CD4-positive, alpha-beta memory T cell (primary cell): ENCODE measurements at regions of chr4 and their contacts with region 1.

Region 1: GRCh38 chr4:100907465-100908454 is 389.9 kb upstream of the EMCN start:
- DNase-seq: no peak
- H3K4me3 ChIP-seq: no peak overlapping the region
- H3K4me3 Mint-ChIP-seq: peak overlapping the region in 1 of 8 donors; percentile 21
- H3K27ac ChIP-seq: no peak overlapping the region
- H3K27ac Mint-ChIP-seq: peak overlapping the region in 2 of 7 donors; percentile 25 to 44
- H3K4me1 ChIP-seq: no peaks in the 10 kb centered on the region
- H3K4me1 Mint-ChIP-seq: peaks cover 0 to 3% (median 0%) of the 10 kb centered on the region in 4 donors
- H3K27me3 ChIP-seq: no peaks in the 10 kb centered on the region
- H3K27me3 Mint-ChIP-seq: no peaks in the 10 kb centered on the region

Region 2: DNA sequence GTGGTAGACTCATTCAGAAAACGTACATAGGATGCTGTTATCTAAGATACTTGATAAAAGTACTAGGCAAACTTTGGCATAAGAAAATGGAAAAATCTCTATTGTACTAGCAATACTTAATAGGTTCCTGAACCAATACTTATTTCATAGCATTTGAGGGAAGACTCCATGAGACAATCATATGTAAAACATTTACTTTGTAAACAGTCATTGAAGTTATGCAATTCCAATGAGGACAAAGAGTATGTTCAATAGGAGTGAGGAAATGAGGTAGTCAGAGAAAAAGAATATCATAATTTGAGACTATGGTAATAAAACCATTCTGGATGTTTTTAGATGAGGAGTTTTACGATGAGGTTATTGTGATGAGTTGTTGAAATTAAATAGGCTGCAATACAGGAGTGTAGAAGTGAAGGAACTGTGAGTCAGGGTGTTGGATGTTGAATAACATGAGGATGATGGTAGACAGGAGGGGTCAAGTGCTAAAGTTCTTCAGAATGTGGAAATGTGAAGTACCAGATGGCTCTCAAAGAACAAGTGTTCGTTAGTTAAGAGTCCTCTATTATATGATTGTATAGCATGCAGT is 41.7 kb after region 1 on chr4:
- CTCF ChIA-PET with region 1: no interaction called
- POLR2A ChIA-PET with region 1: no interaction called
- intact Hi-C with region 1: no loop called
- DNase-seq: no peak
- H3K4me3 ChIP-seq: no peak overlapping the region
- H3K4me3 Mint-ChIP-seq: no peak overlapping the region
- H3K27ac ChIP-seq: no peak overlapping the region
- H3K27ac Mint-ChIP-seq: no peak overlapping the region
- H3K4me1 ChIP-seq: no peaks in the 10 kb centered on the region
- H3K4me1 Mint-ChIP-seq: no peaks in the 10 kb centered on the region
- H3K27me3 ChIP-seq: no peaks in the 10 kb centered on the region
- H3K27me3 Mint-ChIP-seq: peaks cover 0 to 8% of the 10 kb centered on the region in 2 donors

Region 3: DNA sequence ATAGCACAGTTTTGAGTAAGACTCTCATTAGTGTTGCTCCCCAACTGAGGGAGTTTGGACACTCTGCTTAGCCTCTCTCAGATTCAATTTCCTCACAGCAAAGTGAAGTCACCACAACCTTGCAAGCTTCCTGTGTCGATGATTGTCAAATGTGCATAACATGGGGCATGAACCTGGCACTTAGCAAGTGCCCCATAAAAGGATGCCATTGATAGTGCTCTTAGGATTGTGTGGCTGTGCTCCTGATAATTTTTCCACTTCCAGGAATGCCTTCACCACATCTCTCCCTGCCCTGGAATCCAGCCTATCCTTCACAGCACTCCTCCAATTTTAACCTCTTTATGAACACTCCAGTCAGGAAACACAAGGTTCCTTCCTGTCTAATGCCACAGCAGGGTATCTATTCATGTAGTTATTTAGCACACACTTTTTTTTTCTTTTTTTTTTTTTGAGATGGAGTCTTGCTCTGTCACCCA is 130.2 kb after region 1 on chr4:
- CTCF ChIA-PET with region 1: no interaction called
- POLR2A ChIA-PET with region 1: no interaction called
- intact Hi-C with region 1: loop called (anchors 5 kb)
- DNase-seq: peak in 4 of 5 donors; percentile 9 to 39 (median 36)
- H3K4me3 ChIP-seq: no peak overlapping the region
- H3K4me3 Mint-ChIP-seq: peak overlapping the region in 7 of 8 donors; percentile 4 to 85 (median 72)
- H3K27ac ChIP-seq: no peak overlapping the region
- H3K27ac Mint-ChIP-seq: peak overlapping the region; percentile 67 to 90 (median 77)
- H3K4me1 ChIP-seq: peaks cover 47% of the 10 kb centered on the region
- H3K4me1 Mint-ChIP-seq: peaks cover 35 to 48% (median 41%) of the 10 kb centered on the region in 4 donors
- H3K27me3 ChIP-seq: no peaks in the 10 kb centered on the region
- H3K27me3 Mint-ChIP-seq: no peaks in the 10 kb centered on the region

Region 4: GRCh38 chr4:101414496-101414895 is 506.7 kb after region 1 on chr4:
- CTCF ChIA-PET with region 1: no interaction called
- POLR2A ChIA-PET with region 1: no interaction called
- intact Hi-C with region 1: no loop called
- DNase-seq: no peak
- H3K4me3 ChIP-seq: no peak overlapping the region
- H3K4me3 Mint-ChIP-seq: no peak overlapping the region
- H3K27ac ChIP-seq: no peak overlapping the region
- H3K27ac Mint-ChIP-seq: no peak overlapping the region
- H3K4me1 ChIP-seq: peaks cover 32% of the 10 kb centered on the region
- H3K4me1 Mint-ChIP-seq: peaks cover 29 to 47% (median 36%) of the 10 kb centered on the region in 4 donors
- H3K27me3 ChIP-seq: no peaks in the 10 kb centered on the region
- H3K27me3 Mint-ChIP-seq: peaks cover 6 to 11% of the 10 kb centered on the region in 2 donors